ENCODE measurements at regions of chr11 and their contacts with region 1.

Region 1: DNA sequence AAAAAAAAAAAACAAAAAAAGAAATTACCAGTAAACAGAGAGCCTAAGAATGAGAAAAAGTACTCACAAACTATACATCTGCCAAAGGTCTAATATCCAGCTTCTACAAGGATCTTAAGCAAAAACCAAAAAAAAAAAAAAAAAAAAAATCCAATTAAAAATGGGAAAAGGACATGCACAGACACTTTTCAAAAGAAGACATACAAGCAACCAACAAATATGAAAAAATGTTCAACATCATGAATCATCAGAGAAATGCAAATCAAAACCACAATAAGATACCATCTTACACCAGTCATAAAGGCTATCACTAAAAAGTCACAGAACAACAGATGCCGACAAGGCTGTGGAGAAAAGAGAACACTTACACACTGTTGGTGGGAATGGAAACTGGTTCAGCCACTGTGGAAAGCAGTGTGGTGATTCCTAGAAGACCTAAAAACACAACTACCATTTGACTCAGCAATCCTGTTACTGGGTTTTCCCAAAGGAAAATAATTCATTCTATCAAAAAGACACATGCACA is 18.3 kb downstream of the MS4A6A start:
- DNase-seq: no peak
- ATAC-seq: no peak
- H3K4me3 Mint-ChIP-seq: no peak overlapping the region
- H3K27ac Mint-ChIP-seq: no peak overlapping the region
- H3K4me1 Mint-ChIP-seq: no peaks in the 10 kb centered on the region
- H3K27me3 Mint-ChIP-seq: peaks cover 12% of the 10 kb centered on the region
- CTCF ChIP-seq: no peak

Region 2: GRCh38 chr11:60280412-60280811 is 115.8 kb after region 1 on chr11 and contains the start of gene MS4A4A:
- CTCF ChIA-PET with region 1: no interaction called
- POLR2A ChIA-PET with region 1: interaction called, 10 read pairs
- intact Hi-C with region 1: no loop called
- DNase-seq: no peak
- ATAC-seq: peak; percentile 99
- H3K4me3 Mint-ChIP-seq: peak within 1 kb of the TSS; percentile 42
- H3K27ac Mint-ChIP-seq: peak within 1 kb of the TSS; percentile 78
- H3K4me1 Mint-ChIP-seq: peaks cover 24% of the 10 kb centered on the region
- H3K27me3 Mint-ChIP-seq: no peaks in the 10 kb centered on the region
- CTCF ChIP-seq: no peak
- total RNA-seq, gene MS4A4A: 0.20 and 1.4 TPM in 2 replicates